ENCODE measurements at regions of chr9 and their contacts with region 1.

Region 1: DNA sequence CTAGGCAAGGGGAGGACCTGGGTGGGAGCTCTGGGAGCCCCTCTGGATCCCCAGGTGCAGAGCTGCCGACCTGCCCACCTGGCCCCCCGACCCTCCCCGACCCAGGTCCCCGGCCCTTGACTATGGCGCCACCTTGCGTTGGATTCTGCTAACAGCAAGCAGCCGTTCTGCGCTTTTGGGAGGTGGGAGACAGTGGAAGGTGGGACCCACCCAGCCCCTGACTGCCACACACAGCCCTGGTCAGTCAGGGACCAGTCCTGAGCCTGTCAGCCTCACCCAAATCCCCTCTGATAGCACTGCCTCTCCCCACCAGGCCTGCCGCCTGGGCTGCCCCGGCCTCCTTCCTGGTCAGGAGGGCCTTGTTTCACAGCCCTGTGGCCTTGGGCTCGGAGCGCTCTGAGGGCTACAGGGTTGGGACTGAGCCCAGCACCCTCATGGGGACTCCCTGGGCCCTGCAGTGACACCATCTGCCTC is 77.9 kb downstream of the HMCN2 start:
- DNase-seq: peak; percentile 57
- H3K4me3 ChIP-seq: no peak overlapping the region
- H3K27ac ChIP-seq: no peak overlapping the region
- H3K4me1 ChIP-seq: peaks cover 0 to 5% (median 0%) of the 10 kb centered on the region in 6 donors
- H3K27me3 ChIP-seq: peaks cover 0 to 72% (median 0%) of the 10 kb centered on the region in 7 donors
- CTCF ChIP-seq: peak in 9 of 11 experiments; percentile 45 to 74 (median 58)
- POLR2A ChIP-seq: no peak

Region 2: DNA sequence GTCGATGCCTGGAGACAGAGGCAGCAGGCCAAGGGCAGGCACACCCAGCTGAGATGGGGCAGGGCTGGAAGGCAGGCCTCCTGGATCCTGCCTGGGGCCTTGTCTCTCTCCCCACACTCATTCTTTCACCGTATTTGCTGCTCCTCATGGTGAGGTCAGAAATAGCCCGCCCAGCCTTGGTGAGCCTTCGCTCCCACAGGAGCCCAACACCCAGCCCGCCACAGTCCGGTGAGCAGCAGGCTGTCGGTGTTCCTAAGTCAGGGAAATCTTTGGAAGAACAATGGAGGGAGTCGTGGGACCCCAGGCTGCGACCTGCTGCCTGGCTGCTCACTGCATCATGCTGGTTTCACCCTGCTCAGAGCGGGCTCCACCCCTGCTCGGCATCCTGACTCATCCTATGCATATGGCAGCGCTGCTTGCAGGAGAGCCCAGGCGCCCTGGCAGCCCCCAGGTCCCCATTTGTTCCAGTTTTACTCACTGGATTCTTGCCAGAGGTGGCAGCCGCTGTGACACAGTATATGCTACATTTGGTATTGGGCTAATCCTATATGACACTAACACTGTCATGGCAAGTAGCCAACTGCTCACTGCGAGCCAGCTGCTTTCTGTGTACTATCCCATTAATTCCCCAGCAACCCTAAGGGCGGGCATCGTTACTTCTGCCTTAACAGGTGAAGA is 224.5 kb before region 1 on chr9:
- intact Hi-C with region 1: loop called (anchors 10 kb)
- DNase-seq: no peak
- H3K4me3 ChIP-seq: no peak overlapping the region
- H3K27ac ChIP-seq: no peak overlapping the region
- H3K4me1 ChIP-seq: peaks cover 0 to 5% (median 0%) of the 10 kb centered on the region in 6 donors
- H3K27me3 ChIP-seq: no peaks in the 10 kb centered on the region
- CTCF ChIP-seq: no peak
- POLR2A ChIP-seq: no peak

Region 3: GRCh38 chr9:130243015-130243734 is 100.3 kb before region 1 on chr9:
- intact Hi-C with region 1: loop called (anchors 10 kb)
- DNase-seq: peak; percentile 91
- H3K4me3 ChIP-seq: peak overlapping the region in 1 of 8 donors; percentile 54
- H3K27ac ChIP-seq: no peak overlapping the region
- H3K4me1 ChIP-seq: peaks cover 5 to 35% (median 24%) of the 10 kb centered on the region in 6 donors
- H3K27me3 ChIP-seq: peaks cover 0 to 16% (median 0%) of the 10 kb centered on the region in 7 donors
- CTCF ChIP-seq: peak; percentile 78 to 94 (median 89)
- POLR2A ChIP-seq: no peak